Dorsolateral prefrontal cortex (tissue), 120 donors: ENCODE measurements at regions of chr6 and their contacts with region 1.

Region 1: DNA sequence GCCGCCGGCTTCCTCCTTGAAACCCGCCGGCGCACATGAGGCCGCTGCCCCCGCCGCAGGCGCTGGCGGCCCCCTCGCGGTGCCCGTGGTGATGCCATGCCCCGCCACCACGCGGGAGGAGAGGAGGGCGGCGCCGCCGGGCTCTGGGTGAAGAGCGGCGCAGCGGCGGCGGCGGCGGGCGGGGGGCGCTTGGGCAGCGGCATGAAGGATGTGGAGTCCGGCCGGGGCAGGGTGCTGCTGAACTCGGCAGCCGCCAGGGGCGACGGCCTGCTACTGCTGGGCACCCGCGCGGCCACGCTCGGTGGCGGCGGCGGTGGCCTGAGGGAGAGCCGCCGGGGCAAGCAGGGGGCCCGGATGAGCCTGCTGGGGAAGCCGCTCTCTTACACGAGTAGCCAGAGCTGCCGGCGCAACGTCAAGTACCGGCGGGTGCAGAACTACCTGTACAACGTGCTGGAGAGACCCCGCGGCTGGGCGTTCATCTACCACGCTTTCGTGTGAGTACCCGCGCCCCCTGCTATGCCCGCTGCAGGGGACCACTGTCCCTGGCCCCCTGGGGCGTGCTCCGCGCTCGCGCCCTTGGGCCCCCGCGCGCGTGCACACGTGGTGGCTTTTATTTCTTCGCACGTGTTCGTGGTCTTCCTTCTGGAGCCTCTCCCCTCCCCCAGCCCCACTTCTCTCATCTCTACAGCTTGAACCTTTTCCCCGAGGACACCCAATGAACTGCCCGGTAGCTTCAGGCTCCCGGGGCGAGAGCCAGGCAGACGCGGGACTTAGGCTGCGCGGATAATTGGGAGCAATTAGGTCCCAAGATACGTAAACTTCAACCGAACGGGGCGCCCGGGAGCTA is 453 bp downstream of the KCNQ5 start:
- DNase-seq: peak in 8 of 10 donors; percentile 27 to 68 (median 48)
- H3K4me3 ChIP-seq: peak overlapping the region; percentile 52 to 85 (median 71)
- H3K27ac ChIP-seq: peak overlapping the region in 53 of 59 donors; percentile 28 to 89 (median 77)
- H3K27me3 ChIP-seq: peaks cover 0 to 8% (median 0%) of the 10 kb centered on the region in 45 donors
- CTCF ChIP-seq: peak in 24 of 56 donors; percentile 5 to 40 (median 18)

Region 2: GRCh38 chr6:72411872-72412708 is 210.2 kb before region 1 on chr6:
- intact Hi-C with region 1: loop called in 1 of 2 experiments (anchors 2 kb)
- DNase-seq: peak; percentile 56 to 90 (median 78)
- H3K4me3 ChIP-seq: no peak overlapping the region
- H3K27ac ChIP-seq: no peak overlapping the region
- H3K27me3 ChIP-seq: peaks cover 0 to 3% (median 0%) of the 10 kb centered on the region in 45 donors
- CTCF ChIP-seq: peak; percentile 100

Region 3: GRCh38 chr6:72564231-72564630 is 58.1 kb before region 1 on chr6:
- intact Hi-C with region 1: no loop called
- DNase-seq: no peak
- H3K4me3 ChIP-seq: no peak overlapping the region
- H3K27ac ChIP-seq: no peak overlapping the region
- H3K27me3 ChIP-seq: no peaks in the 10 kb centered on the region
- CTCF ChIP-seq: no peak

Region 4: DNA sequence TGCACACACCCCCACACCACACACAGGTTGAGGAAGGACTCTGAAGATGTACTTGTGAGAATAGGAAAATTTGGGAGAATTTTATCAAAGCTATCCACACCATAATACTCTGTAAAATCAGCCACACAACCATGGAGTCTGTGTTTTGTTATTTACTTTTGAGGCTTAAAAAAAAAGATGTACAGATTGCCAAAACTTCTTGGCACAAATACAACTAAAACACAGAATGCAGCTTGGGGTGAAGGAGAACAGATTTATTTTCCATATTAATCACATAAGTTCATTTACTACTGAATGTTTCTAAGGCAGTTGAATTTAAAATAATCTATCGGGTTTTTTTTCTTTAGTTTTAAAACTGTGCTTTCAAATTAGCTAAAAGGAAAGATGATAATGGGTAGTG is 33.2 kb before region 1 on chr6:
- intact Hi-C with region 1: no loop called
- DNase-seq: no peak
- H3K4me3 ChIP-seq: no peak overlapping the region
- H3K27ac ChIP-seq: peak overlapping the region in 2 of 59 donors; percentile 30 to 40
- H3K27me3 ChIP-seq: no peaks in the 10 kb centered on the region
- CTCF ChIP-seq: no peak

Region 5: DNA sequence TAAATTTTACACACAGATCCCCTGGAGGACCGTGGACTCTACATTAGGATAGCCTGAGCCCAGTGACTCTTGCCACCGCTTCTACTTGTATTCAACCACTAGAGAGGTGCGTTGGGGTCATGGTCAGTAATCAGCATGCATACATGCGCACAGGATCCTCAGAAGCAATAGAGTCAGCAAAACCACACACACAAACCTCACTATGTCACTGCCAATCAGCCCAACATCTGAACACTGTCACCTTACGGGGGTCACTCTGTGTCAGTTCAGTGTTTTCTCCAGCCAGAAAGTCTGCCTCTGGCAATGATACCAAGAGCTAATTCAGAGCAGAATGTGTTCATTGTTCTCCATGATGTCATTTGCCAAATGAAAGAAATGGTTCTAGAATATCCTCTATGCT is 377.7 kb after region 1 on chr6:
- intact Hi-C with region 1: loop called in 1 of 2 experiments (anchors 5 kb)
- DNase-seq: peak in 1 of 10 donors; percentile 16
- H3K4me3 ChIP-seq: peak overlapping the region in 4 of 59 donors; percentile 13 to 27 (median 19)
- H3K27ac ChIP-seq: peak overlapping the region in 31 of 59 donors; percentile 0 to 78 (median 38)
- H3K27me3 ChIP-seq: no peaks in the 10 kb centered on the region
- CTCF ChIP-seq: peak in 1 of 56 donors; percentile 10

Region 6: DNA sequence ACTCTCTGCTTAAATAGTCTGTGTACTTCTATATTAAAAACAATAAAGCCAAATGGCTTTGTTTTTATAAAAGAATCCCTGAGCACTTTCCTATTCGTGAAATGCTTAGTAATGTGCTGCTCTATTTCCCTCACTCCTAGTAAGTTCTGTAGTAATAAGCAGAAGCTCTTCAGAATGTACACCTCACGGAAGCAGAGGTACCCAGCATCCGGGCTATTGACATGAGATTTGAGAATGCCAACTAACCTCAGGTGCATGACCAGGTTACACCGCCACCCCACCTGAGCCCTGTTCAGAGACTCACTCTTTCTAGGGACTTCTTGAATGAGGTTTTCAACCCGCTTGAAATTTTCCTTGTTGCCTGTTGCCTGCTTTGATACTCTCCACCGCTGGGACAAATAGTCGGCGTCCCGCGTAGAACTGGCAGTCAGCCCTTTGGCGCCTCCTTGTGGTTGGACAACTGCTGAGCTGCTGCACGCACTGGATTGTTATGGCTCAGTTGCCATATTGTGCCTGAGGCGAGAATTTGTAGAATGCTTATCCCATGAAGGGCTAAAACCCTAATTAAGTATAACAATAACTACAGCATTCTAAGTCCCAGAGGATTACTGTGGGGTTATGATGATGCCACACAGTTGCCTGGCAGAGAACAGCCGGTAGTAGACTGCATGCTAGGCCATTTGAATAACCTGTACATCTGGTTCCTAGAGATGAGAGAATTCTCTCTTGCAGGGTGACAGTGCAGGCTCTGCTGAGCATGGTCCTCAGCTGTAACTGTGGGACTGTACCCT is 507.5 kb after region 1 on chr6:
- intact Hi-C with region 1: loop called (anchors 2 to 5 kb)
- DNase-seq: peak; percentile 23 to 86 (median 80)
- H3K4me3 ChIP-seq: peak overlapping the region in 1 of 59 donors; percentile 37
- H3K27ac ChIP-seq: no peak overlapping the region
- H3K27me3 ChIP-seq: no peaks in the 10 kb centered on the region
- CTCF ChIP-seq: peak; percentile 57 to 97 (median 90)

Region 7: GRCh38 chr6:73180763-73181619 is 558.7 kb after region 1 on chr6:
- intact Hi-C with region 1: loop called (anchors 2 to 10 kb)
- DNase-seq: peak in 6 of 10 donors; percentile 20 to 57 (median 50)
- H3K4me3 ChIP-seq: peak overlapping the region in 47 of 59 donors; percentile 1 to 53 (median 34)
- H3K27ac ChIP-seq: peak overlapping the region in 28 of 59 donors; percentile 2 to 79 (median 34)
- H3K27me3 ChIP-seq: peaks cover 0 to 2% (median 0%) of the 10 kb centered on the region in 45 donors
- CTCF ChIP-seq: peak; percentile 71 to 93 (median 82)